ENCODE measurements at regions of chr15 and their contacts with region 1.

Region 1: GRCh38 chr15:89416141-89416853 is 80.1 kb downstream of the RHCG start:
- DNase-seq: peak; percentile 68
- H3K4me3 ChIP-seq: no peak overlapping the region
- H3K27ac ChIP-seq: no peak overlapping the region
- H3K4me1 ChIP-seq: peaks cover 1 to 6% (median 3%) of the 10 kb centered on the region in 4 donors
- H3K27me3 ChIP-seq: peaks cover 100% of the 10 kb centered on the region
- CTCF ChIP-seq: peak; percentile 63 to 82 (median 67)
- EP300 ChIP-seq: no peak
- POLR2A ChIP-seq: no peak

Region 2: GRCh38 chr15:88725305-88726210 is 690.7 kb before region 1 on chr15:
- in situ Hi-C with region 1: no loop called
- intact Hi-C with region 1: no loop called
- DNase-seq: no peak
- H3K4me3 ChIP-seq: no peak overlapping the region
- H3K27ac ChIP-seq: no peak overlapping the region
- H3K4me1 ChIP-seq: no peaks in the 10 kb centered on the region
- H3K27me3 ChIP-seq: no peaks in the 10 kb centered on the region
- CTCF ChIP-seq: no peak
- EP300 ChIP-seq: no peak
- POLR2A ChIP-seq: no peak

Region 3: GRCh38 chr15:89367485-89368451 is 48.5 kb before region 1 on chr15:
- in situ Hi-C with region 1: loop called in 1 of 4 experiments (anchors 5 kb)
- intact Hi-C with region 1: loop called (anchors 5 kb)
- DNase-seq: no peak
- H3K4me3 ChIP-seq: peak overlapping the region in 1 of 4 donors; percentile 27
- H3K27ac ChIP-seq: no peak overlapping the region
- H3K4me1 ChIP-seq: peaks cover 6 to 16% (median 11%) of the 10 kb centered on the region in 4 donors
- H3K27me3 ChIP-seq: peaks cover 100% of the 10 kb centered on the region
- CTCF ChIP-seq: no peak
- EP300 ChIP-seq: no peak
- POLR2A ChIP-seq: no peak

Measured in transverse colon (tissue), 4 donors.